HCT116 (cell line): ENCODE measurements at regions of chr2 and their contacts with region 1.

Region 1: GRCh38 chr2:162123806-162124758 is 28.0 kb downstream of the GCG start:
- DNase-seq: peak; percentile 61
- ATAC-seq: peak; percentile 70
- H3K4me3 ChIP-seq: no peak overlapping the region
- H3K27ac ChIP-seq: no peak overlapping the region
- H3K4me1 ChIP-seq: no peaks in the 10 kb centered on the region
- H3K27me3 ChIP-seq: no peaks in the 10 kb centered on the region
- CTCF ChIP-seq: peak; percentile 32 to 86 (median 72); a peak in 5 of 6 replicates
- POLR2A ChIP-seq: no peak
- RAD21 ChIP-seq: peak; percentile 86

Region 2: DNA sequence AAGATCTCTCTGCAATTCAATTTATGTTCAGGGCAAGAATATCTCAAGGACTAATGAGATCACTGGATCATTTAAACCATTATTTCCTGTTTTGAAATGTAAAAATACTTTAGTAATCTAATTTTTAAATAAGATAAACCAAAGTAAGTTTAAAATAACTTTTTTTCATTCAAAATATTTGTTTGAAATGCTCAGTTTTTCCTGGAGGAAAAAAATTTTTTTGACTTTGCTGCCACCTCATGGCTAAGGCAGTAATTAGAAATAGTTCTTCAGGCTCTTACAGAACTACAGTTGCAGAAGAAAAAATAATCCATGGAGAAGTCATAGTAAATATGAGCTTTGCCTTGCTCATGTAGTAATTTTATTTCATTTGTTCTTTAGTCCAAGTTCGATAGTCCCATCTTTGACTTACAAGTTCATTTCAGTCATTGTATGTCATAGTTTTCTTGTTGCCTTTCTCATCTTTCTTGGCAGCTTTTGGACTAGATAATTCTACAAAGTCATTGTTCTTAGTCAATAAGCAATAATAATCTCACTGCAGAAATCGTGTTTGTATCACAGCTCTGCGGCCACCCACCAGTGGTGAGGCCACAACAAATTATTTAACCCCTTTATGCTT is 177.5 kb before region 1 on chr2:
- CTCF ChIA-PET with region 1: interaction called, 4 read pairs
- POLR2A ChIA-PET with region 1: no interaction called
- RAD21 ChIA-PET with region 1: no interaction called
- intact Hi-C with region 1: loop called (anchors 5 kb)
- DNase-seq: peak; percentile 38
- ATAC-seq: peak; percentile 49; the same call in 1 of the 2 replicates
- H3K4me3 ChIP-seq: no peak overlapping the region
- H3K27ac ChIP-seq: no peak overlapping the region
- H3K4me1 ChIP-seq: no peaks in the 10 kb centered on the region
- H3K27me3 ChIP-seq: no peaks in the 10 kb centered on the region
- CTCF ChIP-seq: peak; percentile 30 to 70 (median 55); a peak in 5 of 6 replicates
- POLR2A ChIP-seq: no peak
- RAD21 ChIP-seq: peak; percentile 79

Region 3: DNA sequence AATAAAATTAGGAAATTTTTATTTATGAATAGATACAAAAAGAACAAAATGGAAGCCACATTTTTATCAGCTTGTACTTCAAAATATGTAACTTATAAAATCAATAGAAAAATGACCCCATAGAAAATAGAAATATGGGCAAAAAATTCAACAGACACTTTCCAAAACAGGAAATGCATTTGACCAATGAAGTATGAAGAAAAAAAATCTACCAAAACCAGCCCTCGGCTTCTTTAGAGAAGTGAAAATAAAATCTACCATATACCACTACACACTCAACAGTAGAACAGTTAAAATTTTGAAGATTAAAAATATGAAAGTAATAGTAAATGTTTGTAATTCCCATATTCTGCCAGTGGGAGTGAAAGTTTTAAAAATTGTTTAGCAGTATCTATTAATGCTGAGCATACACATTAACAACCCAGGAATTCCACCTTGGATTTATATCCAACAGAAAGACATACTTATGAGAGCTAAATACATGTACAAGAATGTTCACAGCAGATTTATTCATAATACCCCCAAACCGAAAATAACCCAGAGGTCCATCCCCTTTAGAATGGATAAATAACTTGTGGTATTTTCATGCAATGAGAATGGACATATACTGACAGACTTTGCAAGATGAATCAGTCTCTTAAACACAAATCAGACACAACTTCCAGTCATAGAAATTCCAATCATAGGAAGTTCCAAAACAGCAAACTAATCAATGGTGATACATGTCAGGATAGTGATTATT is 1293.7 kb after region 1 on chr2:
- CTCF ChIA-PET with region 1: no interaction called
- POLR2A ChIA-PET with region 1: no interaction called
- RAD21 ChIA-PET with region 1: no interaction called
- intact Hi-C with region 1: no loop called
- DNase-seq: no peak
- ATAC-seq: no peak
- H3K4me3 ChIP-seq: no peak overlapping the region
- H3K27ac ChIP-seq: no peak overlapping the region
- H3K4me1 ChIP-seq: no peaks in the 10 kb centered on the region
- H3K27me3 ChIP-seq: 0 out of 2 replicates have a peak, but pooled peaks cover 4% of the 10 kb centered on the region
- CTCF ChIP-seq: no peak
- POLR2A ChIP-seq: no peak
- RAD21 ChIP-seq: no peak